ENCODE measurements at regions of chr15 and their contacts with region 1.

Region 1: GRCh38 chr15:89740137-89740536 is 10.9 kb downstream of the MESP1 start:
- DNase-seq: peak; percentile 84
- H3K4me3 ChIP-seq: no peak overlapping the region; a peak in 1 of 4 replicates
- H3K27ac ChIP-seq: no peak overlapping the region
- H3K4me1 ChIP-seq: no peaks in the 10 kb centered on the region
- H3K27me3 ChIP-seq: no peaks in the 10 kb centered on the region; the same call in 1 of the 2 replicates
- CTCF ChIP-seq: peak; percentile 85
- EP300 ChIP-seq: no peak
- RAD21 ChIP-seq: peak; percentile 92

Region 2: DNA sequence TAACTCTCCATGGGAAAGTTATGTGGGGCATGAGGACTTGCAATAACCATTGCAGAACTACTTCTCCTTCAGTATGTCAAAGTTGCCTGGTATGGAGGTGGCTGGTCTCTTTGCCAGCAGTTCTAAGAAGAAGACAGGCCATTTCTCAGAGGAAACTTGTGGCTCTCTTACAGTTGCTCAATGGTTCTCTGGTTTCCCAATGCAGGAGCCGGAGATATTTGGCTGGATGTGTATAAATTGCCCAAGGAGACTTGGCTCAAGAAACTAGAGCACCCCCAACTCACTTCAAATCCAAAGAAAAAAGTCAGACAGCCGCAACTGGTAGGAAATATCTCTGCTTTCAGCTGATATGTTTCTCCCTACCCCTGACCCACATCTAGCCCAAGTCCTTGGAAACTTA is 25.4 kb before region 1 on chr15:
- CTCF ChIA-PET with region 1: no interaction called
- POLR2A ChIA-PET with region 1: no interaction called
- DNase-seq: no peak
- H3K4me3 ChIP-seq: no peak overlapping the region
- H3K27ac ChIP-seq: no peak overlapping the region
- H3K4me1 ChIP-seq: no peaks in the 10 kb centered on the region
- H3K27me3 ChIP-seq: peaks cover 7% of the 10 kb centered on the region; the same call in 1 of the 2 replicates
- CTCF ChIP-seq: no peak
- EP300 ChIP-seq: no peak
- RAD21 ChIP-seq: no peak

Region 3: GRCh38 chr15:89750560-89751542 is 10.7 kb after region 1 on chr15 and contains the start of gene MESP1:
- CTCF ChIA-PET with region 1: interaction called, 13 read pairs
- POLR2A ChIA-PET with region 1: no interaction called
- DNase-seq: peak; percentile 98
- H3K4me3 ChIP-seq: peak within 1 kb of the TSS; percentile 56 to 75
- H3K27ac ChIP-seq: peak within 1 kb of the TSS in 1 of 2 experiments; percentile 40; a peak in 1 of 4 replicates
- H3K4me1 ChIP-seq: peaks cover 0 to 12% of the 10 kb centered on the region in 2 experiments; a peak in 1 of 4 replicates
- H3K27me3 ChIP-seq: no peaks in the 10 kb centered on the region
- CTCF ChIP-seq: peak; percentile 58
- EP300 ChIP-seq: no peak; a peak in 1 of 4 replicates
- RAD21 ChIP-seq: peak; percentile 56
- polyA plus RNA-seq, gene MESP1: 0.52 and 0.74 TPM in 2 replicates

Region 4: DNA sequence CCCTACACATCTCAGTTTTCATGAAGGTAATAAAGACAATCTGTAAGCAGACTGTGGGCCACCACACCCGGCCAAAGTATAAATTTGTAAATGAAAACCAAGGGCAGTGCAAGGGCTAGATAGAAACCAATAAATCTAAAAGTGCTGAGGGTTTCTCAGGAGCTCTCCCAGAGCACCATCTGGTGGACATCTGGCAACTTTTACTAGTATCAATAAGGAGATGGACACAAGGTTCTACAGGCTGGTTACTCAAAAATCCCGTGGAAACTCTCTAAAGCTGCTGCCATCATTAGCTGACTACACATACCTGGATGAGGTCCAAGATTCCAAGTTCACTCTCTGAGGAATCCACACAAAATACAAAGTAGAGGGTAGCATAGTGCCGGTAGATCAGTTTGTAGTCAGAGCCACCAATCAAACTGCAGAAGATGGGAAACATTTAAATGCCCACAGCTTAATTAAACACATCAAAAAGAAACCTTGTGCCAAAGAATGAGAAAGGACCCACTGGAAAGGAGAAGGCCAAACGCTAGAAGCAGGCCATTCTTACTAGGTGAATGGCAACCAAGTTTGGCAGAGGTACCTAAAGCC is 148.2 kb after region 1 on chr15:
- CTCF ChIA-PET with region 1: interaction called, 28 read pairs
- POLR2A ChIA-PET with region 1: interaction called, 3 read pairs
- DNase-seq: no peak
- H3K4me3 ChIP-seq: no peak overlapping the region
- H3K27ac ChIP-seq: no peak overlapping the region
- H3K4me1 ChIP-seq: peaks cover 0 to 2% of the 10 kb centered on the region in 2 experiments; a peak in 1 of 4 replicates
- H3K27me3 ChIP-seq: no peaks in the 10 kb centered on the region
- CTCF ChIP-seq: peak; percentile 67
- EP300 ChIP-seq: no peak
- RAD21 ChIP-seq: peak; percentile 59